A549 (cell line): ENCODE measurements at regions of chr20 and their contacts with region 1.

Region 1: DNA sequence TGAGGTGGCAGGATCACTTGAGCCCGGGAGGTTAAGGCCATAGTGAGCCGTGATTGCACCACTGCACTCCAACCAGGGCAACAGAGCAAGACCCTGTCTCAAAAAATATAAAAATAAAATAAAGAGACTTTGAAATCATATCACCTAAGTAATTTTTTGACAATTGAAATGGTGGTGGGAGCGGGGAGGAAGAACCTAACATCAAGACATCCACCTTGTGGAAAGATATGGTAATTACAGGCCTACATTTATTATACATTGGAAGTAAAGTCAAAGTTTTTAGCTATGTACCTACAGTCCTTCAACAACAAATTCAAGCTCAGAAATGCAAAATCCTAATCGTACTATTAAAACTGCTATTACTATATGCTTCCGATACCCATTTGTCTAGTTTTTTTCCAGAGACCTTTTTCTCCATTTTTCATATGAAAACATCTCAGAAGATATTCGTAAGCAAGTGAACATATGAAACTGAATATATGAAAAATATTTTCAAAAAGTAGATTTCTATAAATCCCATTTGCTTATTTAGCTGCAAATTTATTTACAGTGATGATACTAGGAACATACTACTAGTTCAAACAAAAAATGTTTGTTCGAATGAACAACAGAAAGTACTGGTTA is 83.3 kb downstream of the SYCP2 start:
- DNase-seq: peak; percentile 25 to 49
- ATAC-seq: peak in 1 of 2 experiments; percentile 70; a peak in 2 of 6 replicates
- H3K4me3 ChIP-seq: no peak overlapping the region
- H3K27ac ChIP-seq: no peak overlapping the region
- H3K4me1 ChIP-seq: no peaks in the 10 kb centered on the region
- CTCF ChIP-seq: peak; percentile 57
- EP300 ChIP-seq: no peak
- POLR2A ChIP-seq: no peak
- RAD21 ChIP-seq: peak; percentile 52 to 54; a peak in 4 of 5 replicates

Region 2: DNA sequence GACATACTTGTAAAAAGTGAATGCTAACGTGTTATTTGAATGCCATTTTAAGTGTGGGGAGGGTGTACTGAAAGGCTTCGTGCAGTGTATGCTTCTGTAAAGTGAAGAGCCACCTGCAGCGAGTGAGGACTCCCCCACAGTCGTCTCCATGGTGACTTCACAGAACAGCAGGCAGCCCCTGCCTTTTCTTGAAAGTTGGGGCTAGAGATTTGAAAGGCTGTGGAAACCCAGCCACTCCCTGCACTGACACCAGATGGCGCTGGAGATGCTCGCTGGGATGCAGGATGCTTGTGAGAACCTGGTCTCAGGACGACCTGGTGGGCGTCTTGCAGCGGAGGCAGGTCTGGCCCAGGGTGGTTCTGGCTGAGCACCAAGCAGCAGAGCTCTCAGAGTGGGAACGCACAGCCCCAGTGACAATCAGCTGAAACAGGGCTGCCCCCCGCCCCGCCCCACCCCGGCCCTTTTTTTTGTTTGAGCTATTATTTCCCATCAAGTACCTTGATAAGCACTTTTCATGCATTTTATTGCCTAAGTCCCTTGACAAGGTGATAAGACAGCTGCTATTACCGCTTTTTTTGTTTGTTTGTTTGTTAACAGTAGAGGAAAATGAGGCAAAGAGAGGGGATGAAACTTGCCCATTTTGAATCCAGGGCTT is 67.0 kb before region 1 on chr20:
- CTCF ChIA-PET with region 1: interaction called, 68 read pairs
- POLR2A ChIA-PET with region 1: no interaction called
- DNase-seq: peak; percentile 46 to 65
- ATAC-seq: peak; percentile 67 to 88; a peak in 4 of 6 replicates
- H3K4me3 ChIP-seq: no peak overlapping the region
- H3K27ac ChIP-seq: no peak overlapping the region
- H3K4me1 ChIP-seq: no peaks in the 10 kb centered on the region
- CTCF ChIP-seq: peak; percentile 65
- EP300 ChIP-seq: no peak
- POLR2A ChIP-seq: no peak
- RAD21 ChIP-seq: peak; percentile 59 to 70

Region 3: GRCh38 chr20:59835448-59836395 is 14.4 kb before region 1 on chr20:
- CTCF ChIA-PET with region 1: interaction called, 16 read pairs
- POLR2A ChIA-PET with region 1: no interaction called
- DNase-seq: no peak
- ATAC-seq: no peak
- H3K4me3 ChIP-seq: no peak overlapping the region
- H3K27ac ChIP-seq: no peak overlapping the region
- H3K4me1 ChIP-seq: no peaks in the 10 kb centered on the region
- CTCF ChIP-seq: no peak
- EP300 ChIP-seq: no peak
- POLR2A ChIP-seq: no peak
- RAD21 ChIP-seq: no peak

Region 4: DNA sequence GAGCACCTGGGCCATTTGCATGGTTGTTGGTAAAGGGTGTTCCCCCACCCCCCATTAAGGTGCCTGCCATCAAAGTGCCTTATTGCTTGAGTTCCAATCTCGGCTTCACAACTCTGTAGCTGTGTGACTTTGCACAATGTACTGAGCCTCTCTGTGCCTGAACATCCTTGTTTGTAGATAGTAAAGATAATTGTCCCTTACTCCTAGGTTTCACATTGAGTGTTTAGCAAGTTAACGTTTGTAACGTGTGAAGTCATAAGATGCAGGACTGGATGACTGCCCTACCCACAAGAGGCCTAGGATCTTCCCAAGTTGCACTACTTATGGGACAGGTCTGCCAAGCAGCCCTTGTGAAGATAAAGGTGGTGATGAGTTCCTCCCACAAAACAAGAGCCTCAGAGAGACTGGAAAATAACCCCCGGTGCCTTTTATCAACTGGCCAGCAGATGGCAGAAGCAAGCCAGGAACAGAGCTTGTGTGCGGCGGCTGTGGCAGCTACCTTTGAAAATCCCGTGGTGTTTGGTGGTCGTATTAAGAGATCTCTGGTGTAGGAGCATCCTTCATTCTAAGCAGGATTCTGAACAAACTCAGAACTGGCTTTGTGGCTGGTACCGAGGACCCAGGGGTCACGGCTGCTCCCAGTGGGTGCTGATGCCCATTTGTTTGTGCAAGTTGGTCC is 207.1 kb after region 1 on chr20:
- CTCF ChIA-PET with region 1: no interaction called
- POLR2A ChIA-PET with region 1: no interaction called
- DNase-seq: peak; percentile 56 to 68
- ATAC-seq: peak; percentile 76 to 88
- H3K4me3 ChIP-seq: no peak overlapping the region
- H3K27ac ChIP-seq: no peak overlapping the region
- H3K4me1 ChIP-seq: no peaks in the 10 kb centered on the region
- CTCF ChIP-seq: peak; percentile 81
- EP300 ChIP-seq: no peak
- POLR2A ChIP-seq: no peak
- RAD21 ChIP-seq: peak; percentile 85 to 86